Uterus (tissue), 4 donors: ENCODE measurements at regions of chr2 and their contacts with region 1.

Region 1: DNA sequence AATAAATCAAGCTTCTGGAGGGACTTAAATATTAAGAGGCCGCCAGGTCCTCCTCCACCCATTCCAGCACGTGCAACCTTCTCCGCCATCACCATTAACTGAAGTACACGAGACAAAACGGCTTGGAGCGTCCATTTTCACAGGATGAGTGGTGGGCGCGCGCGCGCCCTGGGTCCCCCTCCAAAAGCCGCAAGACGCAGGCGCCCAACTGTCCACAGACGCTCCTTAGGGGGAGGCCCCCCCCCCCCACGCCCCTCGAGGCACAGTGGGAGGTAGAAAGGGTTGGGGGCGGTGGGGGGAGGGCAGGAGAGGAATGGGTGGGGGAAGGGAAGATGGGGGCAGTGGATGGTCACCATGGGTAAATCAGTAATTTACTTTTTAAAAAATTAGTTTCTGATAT is 10.5 kb upstream of the STAMBP start:
- DNase-seq: no peak
- H3K4me3 ChIP-seq: no peak overlapping the region
- H3K27ac ChIP-seq: no peak overlapping the region
- H3K4me1 ChIP-seq: no peaks in the 10 kb centered on the region
- H3K27me3 ChIP-seq: no peaks in the 10 kb centered on the region
- CTCF ChIP-seq: no peak
- POLR2A ChIP-seq: no peak

Region 2: DNA sequence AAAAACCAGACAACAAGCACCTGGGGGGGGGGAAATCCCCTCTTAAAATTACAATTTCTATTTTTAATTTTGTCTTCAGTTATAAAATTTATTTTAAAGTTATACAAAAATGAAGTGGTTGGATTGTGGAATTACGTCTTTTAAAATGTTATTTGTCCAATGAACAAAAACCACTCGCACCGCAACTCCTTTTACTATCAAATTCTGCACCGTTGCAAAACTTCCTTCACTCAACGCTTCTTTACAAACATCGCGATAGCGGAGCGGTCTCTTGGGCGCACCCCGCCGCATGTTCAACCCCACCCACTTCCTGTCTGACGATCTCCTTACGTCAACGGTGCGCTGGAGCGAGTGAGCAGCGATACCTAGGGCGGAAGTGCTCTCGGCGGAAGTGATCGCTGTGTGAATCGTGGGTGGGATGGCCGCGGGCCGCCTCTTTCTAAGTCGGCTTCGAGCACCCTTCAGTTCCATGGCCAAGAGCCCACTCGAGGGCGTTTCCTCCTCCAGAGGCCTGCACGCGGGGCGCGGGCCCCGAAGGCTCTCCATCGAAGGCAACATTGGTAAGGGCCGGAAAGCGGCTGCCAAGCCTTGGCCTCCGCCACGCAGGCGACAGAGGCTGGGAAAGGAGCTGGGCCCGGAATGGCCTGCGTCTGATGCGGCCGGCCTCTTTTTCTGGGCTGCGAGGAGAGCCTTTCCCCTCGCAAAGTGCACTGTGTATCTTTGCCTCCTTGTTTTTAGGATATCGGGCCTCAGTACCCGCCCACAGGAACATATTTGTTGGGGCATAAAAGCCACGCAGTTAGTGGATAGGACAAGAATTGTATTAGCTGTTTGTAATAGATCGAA is 108.4 kb after region 1 on chr2 and contains the start of gene DGUOK:
- intact Hi-C with region 1: no loop called
- DNase-seq: peak; percentile 97 to 99
- H3K4me3 ChIP-seq: peak within 1 kb of the TSS; percentile 87 to 93
- H3K27ac ChIP-seq: peak within 1 kb of the TSS; percentile 93 to 97
- H3K4me1 ChIP-seq: peaks cover 0 to 13% of the 10 kb centered on the region in 2 donors
- H3K27me3 ChIP-seq: no peaks in the 10 kb centered on the region
- CTCF ChIP-seq: peak in 1 of 4 experiments; percentile 27
- POLR2A ChIP-seq: peak; percentile 93 to 94
- total RNA-seq, gene DGUOK: 43.6 to 128 (median 58.6) TPM

Region 3: GRCh38 chr2:74149247-74149525 is 330.9 kb after region 1 on chr2:
- intact Hi-C with region 1: no loop called
- DNase-seq: no peak
- H3K4me3 ChIP-seq: no peak overlapping the region
- H3K27ac ChIP-seq: no peak overlapping the region
- H3K4me1 ChIP-seq: peaks cover 0 to 14% of the 10 kb centered on the region in 2 donors
- H3K27me3 ChIP-seq: no peaks in the 10 kb centered on the region
- CTCF ChIP-seq: no peak
- POLR2A ChIP-seq: no peak

Region 4: GRCh38 chr2:74334931-74335333 is 516.6 kb after region 1 on chr2:
- intact Hi-C with region 1: loop called (anchors 10 kb)
- DNase-seq: peak; percentile 67 to 74
- H3K4me3 ChIP-seq: no peak overlapping the region
- H3K27ac ChIP-seq: no peak overlapping the region
- H3K4me1 ChIP-seq: no peaks in the 10 kb centered on the region
- H3K27me3 ChIP-seq: no peaks in the 10 kb centered on the region
- CTCF ChIP-seq: peak; percentile 77 to 93 (median 80)
- POLR2A ChIP-seq: no peak